ENCODE measurements at regions of chr2 and their contacts with region 1.

Region 1: GRCh38 chr2:118088051-118089024 is at the start of gene INSIG2:
- DNase-seq: peak; percentile 99
- H3K4me3 ChIP-seq: peak within 1 kb of the TSS; percentile 81 to 93 (median 89)
- H3K27ac ChIP-seq: peak within 1 kb of the TSS; percentile 98
- H3K4me1 ChIP-seq: peaks cover 11% of the 10 kb centered on the region
- H3K27me3 ChIP-seq: no peaks in the 10 kb centered on the region
- CTCF ChIP-seq: peak; percentile 1 to 32
- total RNA-seq, gene INSIG2: 10.5 to 19.8 TPM

Region 2: DNA sequence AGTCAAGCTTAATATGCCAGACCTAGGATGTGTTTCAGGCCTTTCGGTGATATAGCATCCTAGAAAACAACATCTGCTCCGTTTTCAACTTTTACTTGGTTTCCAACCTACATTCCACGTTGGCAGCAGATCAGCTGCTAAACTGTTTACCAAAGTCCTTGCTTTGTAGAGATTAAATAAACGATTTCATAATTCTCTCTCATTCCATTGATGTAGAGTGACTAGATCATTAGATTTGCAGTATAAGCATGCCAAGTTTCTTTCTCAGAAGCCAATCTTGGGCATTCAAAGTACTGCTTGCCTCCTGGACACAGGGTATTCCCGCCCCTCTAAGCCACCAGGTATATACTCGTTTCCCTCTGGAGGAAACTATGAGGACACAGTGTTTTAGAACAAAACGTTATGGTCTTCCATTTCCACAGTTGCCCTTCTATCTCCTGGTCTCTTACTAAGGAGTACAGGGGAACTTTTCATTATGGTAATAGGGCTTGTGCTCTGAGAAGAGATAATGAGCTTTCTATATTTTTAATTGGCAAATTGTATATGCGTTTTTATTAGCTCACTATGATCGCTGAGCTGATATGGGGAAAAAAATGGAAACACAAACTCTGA is 10.6 kb before region 1 on chr2:
- CTCF ChIA-PET with region 1: interaction called, 19 read pairs
- dilution Hi-C with region 1: no loop called
- in situ Hi-C with region 1: no loop called
- intact Hi-C with region 1: no loop called
- DNase-seq: no peak
- H3K4me3 ChIP-seq: no peak overlapping the region
- H3K27ac ChIP-seq: no peak overlapping the region
- H3K4me1 ChIP-seq: no peaks in the 10 kb centered on the region
- H3K27me3 ChIP-seq: no peaks in the 10 kb centered on the region
- CTCF ChIP-seq: no peak

Region 3: DNA sequence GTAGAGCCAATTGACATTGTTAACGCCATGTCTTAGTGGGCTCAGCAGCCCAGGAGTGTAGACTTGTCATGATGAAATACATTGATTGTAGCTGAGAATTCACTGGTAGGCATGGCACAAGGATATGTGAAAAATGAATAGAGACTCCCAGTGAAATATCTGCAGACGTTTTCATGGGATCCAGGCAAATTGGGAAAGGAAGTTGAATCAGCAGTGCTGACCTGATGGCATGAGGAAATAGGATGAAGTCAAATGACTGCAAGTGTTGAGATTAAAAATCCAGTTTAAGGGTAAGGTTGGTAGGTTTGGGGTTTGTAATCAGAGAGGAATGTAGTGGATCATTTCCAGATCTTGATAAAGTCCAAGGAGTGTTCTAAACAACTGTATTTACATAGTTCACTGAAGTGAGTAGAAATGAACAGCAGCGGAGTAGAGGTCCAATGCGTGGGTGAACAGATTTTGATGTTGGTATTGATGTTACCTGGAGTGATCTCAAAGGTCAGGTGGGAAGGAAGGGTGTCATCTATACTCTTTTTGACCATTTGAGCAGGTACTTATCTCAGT is 24.5 kb after region 1 on chr2:
- CTCF ChIA-PET with region 1: interaction called, 3 read pairs
- dilution Hi-C with region 1: no loop called
- in situ Hi-C with region 1: no loop called
- intact Hi-C with region 1: loop called (anchors 2 kb)
- DNase-seq: peak; percentile 94
- H3K4me3 ChIP-seq: no peak overlapping the region
- H3K27ac ChIP-seq: peak overlapping the region; percentile 88
- H3K4me1 ChIP-seq: peaks cover 44% of the 10 kb centered on the region
- H3K27me3 ChIP-seq: no peaks in the 10 kb centered on the region
- CTCF ChIP-seq: no peak

Region 4: GRCh38 chr2:118122594-118123281 is 34.4 kb after region 1 on chr2:
- CTCF ChIA-PET with region 1: interaction called, 4 read pairs
- dilution Hi-C with region 1: no loop called
- in situ Hi-C with region 1: no loop called
- intact Hi-C with region 1: loop called (anchors 1 kb)
- DNase-seq: peak; percentile 34
- H3K4me3 ChIP-seq: no peak overlapping the region
- H3K27ac ChIP-seq: peak overlapping the region; percentile 100
- H3K4me1 ChIP-seq: peaks cover 41% of the 10 kb centered on the region
- H3K27me3 ChIP-seq: no peaks in the 10 kb centered on the region
- CTCF ChIP-seq: no peak

Region 5: GRCh38 chr2:118186110-118186857 is 97.9 kb after region 1 on chr2:
- CTCF ChIA-PET with region 1: no interaction called
- dilution Hi-C with region 1: no loop called
- in situ Hi-C with region 1: no loop called
- intact Hi-C with region 1: loop called (anchors 10 kb)
- DNase-seq: peak; percentile 56
- H3K4me3 ChIP-seq: peak overlapping the region; percentile 46 to 75 (median 59)
- H3K27ac ChIP-seq: peak overlapping the region; percentile 46
- H3K4me1 ChIP-seq: peaks cover 7% of the 10 kb centered on the region
- H3K27me3 ChIP-seq: no peaks in the 10 kb centered on the region
- CTCF ChIP-seq: no peak

Measured in mammary epithelial cell (primary cell).